CD4-positive, alpha-beta T cell (primary cell): ENCODE measurements at regions of chr6 and their contacts with region 1.

Region 1: DNA sequence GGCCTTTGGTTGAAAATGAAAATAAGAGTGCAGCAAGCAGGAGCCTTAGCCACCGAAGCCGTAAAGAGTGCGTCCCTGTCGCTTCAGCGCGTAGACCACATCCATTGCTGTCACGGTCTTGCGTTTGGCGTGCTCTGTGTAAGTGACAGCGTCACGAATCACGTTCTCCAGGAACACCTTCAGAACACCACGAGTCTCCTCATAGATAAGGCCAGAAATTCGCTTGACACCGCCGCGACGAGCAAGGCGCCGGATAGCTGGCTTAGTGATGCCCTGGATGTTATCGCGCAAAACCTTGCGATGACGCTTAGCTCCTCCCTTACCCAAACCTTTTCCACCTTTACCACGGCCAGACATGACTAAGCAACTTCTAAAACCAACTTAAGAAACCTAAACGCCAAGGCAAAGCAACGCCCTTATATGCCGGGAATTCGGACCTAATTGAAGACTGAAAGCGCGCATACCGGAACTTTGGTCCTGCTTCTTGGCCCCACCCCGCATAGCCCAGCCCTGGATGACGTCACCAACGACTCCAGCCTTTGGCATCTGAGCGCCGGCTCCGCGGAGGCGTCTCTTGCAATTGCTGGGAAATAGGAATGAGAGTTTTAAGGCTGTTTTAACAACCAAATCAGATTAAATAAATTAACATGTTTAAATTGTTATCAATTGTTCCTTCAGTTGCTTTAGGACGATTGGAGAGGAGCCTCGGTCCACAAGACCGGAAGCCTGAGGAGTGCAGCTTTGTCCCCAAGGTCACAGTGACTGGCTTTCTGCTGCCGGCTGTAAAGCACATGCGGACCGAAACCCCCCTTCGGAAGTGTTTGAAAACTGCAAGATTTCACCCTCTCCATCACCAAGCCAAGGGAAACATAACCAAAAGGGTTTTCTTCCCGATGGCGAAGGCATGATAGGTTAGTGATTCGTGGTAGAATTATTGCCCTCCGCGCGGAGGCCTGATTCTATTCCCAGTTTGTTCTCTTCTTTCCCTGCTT is 79.6 kb upstream of the BTN3A2 start:
- DNase-seq: peak; percentile 85 to 99 (median 92)
- ATAC-seq: peak; percentile 82
- H3K4me3 ChIP-seq: peak overlapping the region; percentile 62
- H3K4me3 Mint-ChIP-seq: peak overlapping the region; percentile 87
- H3K27ac ChIP-seq: peak overlapping the region; percentile 82 to 85
- H3K27ac Mint-ChIP-seq: peak overlapping the region; percentile 96
- H3K4me1 ChIP-seq: peaks cover 16% of the 10 kb centered on the region
- H3K4me1 Mint-ChIP-seq: peaks cover 24% of the 10 kb centered on the region
- H3K27me3 ChIP-seq: no peaks in the 10 kb centered on the region
- H3K27me3 Mint-ChIP-seq: peaks cover 11% of the 10 kb centered on the region
- CTCF ChIP-seq: no peak

Region 2: GRCh38 chr6:25732468-25733198 is 552.8 kb before region 1 on chr6:
- CTCF ChIA-PET with region 1: no interaction called
- POLR2A ChIA-PET with region 1: no interaction called
- intact Hi-C with region 1: no loop called
- DNase-seq: no peak
- ATAC-seq: no peak
- H3K4me3 ChIP-seq: no peak overlapping the region
- H3K4me3 Mint-ChIP-seq: no peak overlapping the region
- H3K27ac ChIP-seq: no peak overlapping the region
- H3K27ac Mint-ChIP-seq: no peak overlapping the region
- H3K4me1 ChIP-seq: no peaks in the 10 kb centered on the region
- H3K4me1 Mint-ChIP-seq: no peaks in the 10 kb centered on the region
- H3K27me3 ChIP-seq: peaks cover 14 to 42% of the 10 kb centered on the region in 2 experiments
- H3K27me3 Mint-ChIP-seq: peaks cover 86% of the 10 kb centered on the region
- CTCF ChIP-seq: no peak

Region 3: GRCh38 chr6:26175428-26176181 is 109.8 kb before region 1 on chr6:
- CTCF ChIA-PET with region 1: no interaction called
- POLR2A ChIA-PET with region 1: interaction called, 23 read pairs
- intact Hi-C with region 1: loop called (anchors 1 kb)
- DNase-seq: peak in 11 of 14 experiments; percentile 13 to 85 (median 54)
- ATAC-seq: no peak
- H3K4me3 ChIP-seq: no peak overlapping the region
- H3K4me3 Mint-ChIP-seq: peak overlapping the region; percentile 83
- H3K27ac ChIP-seq: peak overlapping the region in 1 of 2 donors; percentile 41
- H3K27ac Mint-ChIP-seq: peak overlapping the region; percentile 93
- H3K4me1 ChIP-seq: peaks cover 17% of the 10 kb centered on the region
- H3K4me1 Mint-ChIP-seq: peaks cover 53% of the 10 kb centered on the region
- H3K27me3 ChIP-seq: no peaks in the 10 kb centered on the region
- H3K27me3 Mint-ChIP-seq: no peaks in the 10 kb centered on the region
- CTCF ChIP-seq: peak; percentile 87

Region 4: DNA sequence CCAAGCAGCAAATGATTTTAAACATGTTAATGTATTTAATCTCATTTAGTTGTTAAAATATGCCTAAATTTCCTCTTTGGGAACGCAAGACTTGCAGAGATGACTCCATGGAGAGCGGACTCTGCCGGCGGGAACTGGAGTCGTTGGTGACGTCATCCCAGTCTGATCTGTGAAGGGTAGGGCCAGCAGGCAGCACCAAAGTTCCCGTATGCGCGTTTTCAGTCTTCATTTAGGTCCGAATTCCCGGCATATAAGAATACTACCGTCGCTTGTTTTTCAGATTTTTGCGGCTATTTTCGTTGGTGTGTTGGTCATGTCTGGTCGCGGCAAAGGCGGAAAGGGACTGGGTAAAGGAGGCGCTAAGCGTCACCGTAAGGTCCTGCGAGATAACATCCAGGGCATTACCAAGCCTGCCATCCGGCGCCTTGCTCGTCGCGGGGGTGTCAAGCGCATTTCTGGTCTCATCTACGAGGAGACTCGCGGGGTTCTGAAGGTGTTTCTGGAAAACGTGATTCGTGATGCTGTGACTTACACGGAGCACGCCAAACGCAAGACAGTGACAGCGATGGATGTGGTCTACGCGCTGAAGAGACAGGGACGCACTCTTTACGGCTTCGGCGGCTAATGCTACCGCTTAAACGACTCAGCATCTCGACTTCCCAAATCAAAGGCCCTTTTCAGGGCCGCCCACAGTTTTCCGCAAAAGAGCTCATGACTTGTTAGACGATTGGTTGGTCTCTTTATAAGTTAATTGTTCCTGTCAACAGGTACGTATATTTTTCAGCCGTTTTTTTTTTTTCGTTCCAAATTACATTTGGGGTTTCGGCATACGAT is 80.9 kb before region 1 on chr6:
- CTCF ChIA-PET with region 1: interaction called, 3 read pairs
- POLR2A ChIA-PET with region 1: interaction called, 163 read pairs
- intact Hi-C with region 1: loop called in 1 of 2 experiments (anchors 2 kb)
- DNase-seq: peak; percentile 73 to 98 (median 80)
- ATAC-seq: peak; percentile 69
- H3K4me3 ChIP-seq: peak overlapping the region; percentile 68
- H3K4me3 Mint-ChIP-seq: no peak overlapping the region
- H3K27ac ChIP-seq: peak overlapping the region; percentile 89 to 90
- H3K27ac Mint-ChIP-seq: no peak overlapping the region
- H3K4me1 ChIP-seq: peaks cover 34% of the 10 kb centered on the region
- H3K4me1 Mint-ChIP-seq: peaks cover 8% of the 10 kb centered on the region
- H3K27me3 ChIP-seq: no peaks in the 10 kb centered on the region
- H3K27me3 Mint-ChIP-seq: no peaks in the 10 kb centered on the region
- CTCF ChIP-seq: peak; percentile 32

Region 5: DNA sequence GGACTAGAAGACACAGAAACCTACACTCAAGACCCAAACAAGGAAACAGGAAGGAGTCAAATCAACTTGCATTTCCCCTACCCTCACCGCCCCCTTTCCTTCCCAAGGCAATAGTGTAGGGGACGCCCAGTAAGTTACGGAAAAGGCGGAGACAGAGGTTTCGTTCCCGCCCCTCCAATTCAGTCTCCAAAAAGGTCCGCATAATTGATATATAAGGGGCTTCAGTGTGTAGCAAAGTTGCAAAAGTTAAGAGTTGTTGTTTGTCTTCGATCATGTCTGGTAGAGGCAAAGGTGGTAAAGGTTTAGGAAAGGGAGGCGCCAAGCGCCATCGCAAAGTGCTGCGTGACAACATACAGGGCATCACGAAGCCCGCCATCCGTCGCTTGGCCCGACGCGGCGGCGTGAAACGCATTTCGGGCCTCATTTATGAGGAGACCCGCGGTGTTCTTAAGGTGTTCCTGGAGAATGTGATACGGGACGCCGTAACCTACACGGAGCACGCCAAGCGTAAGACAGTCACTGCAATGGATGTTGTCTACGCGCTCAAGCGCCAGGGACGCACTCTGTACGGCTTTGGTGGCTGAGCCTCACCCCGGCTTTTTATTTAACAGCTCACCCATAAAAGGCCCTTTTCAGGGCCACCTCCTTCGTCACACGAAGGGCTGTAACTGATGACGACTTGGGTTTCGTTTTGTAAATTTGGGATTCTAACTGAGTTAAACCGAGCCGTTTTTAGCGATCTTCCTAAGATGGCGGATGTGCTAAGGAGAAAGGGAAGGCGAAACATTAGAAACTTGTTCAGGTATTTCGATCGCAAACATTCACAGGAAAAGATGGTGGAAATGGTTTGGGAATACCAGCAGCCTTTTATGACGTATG is 45.0 kb before region 1 on chr6:
- CTCF ChIA-PET with region 1: no interaction called
- POLR2A ChIA-PET with region 1: interaction called, 133 read pairs
- intact Hi-C with region 1: no loop called
- DNase-seq: peak; percentile 45 to 96 (median 64)
- ATAC-seq: peak; percentile 76
- H3K4me3 ChIP-seq: peak overlapping the region; percentile 66
- H3K4me3 Mint-ChIP-seq: peak overlapping the region; percentile 84
- H3K27ac ChIP-seq: peak overlapping the region; percentile 78 to 90
- H3K27ac Mint-ChIP-seq: peak overlapping the region; percentile 96
- H3K4me1 ChIP-seq: peaks cover 17% of the 10 kb centered on the region
- H3K4me1 Mint-ChIP-seq: peaks cover 23% of the 10 kb centered on the region
- H3K27me3 ChIP-seq: no peaks in the 10 kb centered on the region
- H3K27me3 Mint-ChIP-seq: no peaks in the 10 kb centered on the region
- CTCF ChIP-seq: no peak

Region 6: DNA sequence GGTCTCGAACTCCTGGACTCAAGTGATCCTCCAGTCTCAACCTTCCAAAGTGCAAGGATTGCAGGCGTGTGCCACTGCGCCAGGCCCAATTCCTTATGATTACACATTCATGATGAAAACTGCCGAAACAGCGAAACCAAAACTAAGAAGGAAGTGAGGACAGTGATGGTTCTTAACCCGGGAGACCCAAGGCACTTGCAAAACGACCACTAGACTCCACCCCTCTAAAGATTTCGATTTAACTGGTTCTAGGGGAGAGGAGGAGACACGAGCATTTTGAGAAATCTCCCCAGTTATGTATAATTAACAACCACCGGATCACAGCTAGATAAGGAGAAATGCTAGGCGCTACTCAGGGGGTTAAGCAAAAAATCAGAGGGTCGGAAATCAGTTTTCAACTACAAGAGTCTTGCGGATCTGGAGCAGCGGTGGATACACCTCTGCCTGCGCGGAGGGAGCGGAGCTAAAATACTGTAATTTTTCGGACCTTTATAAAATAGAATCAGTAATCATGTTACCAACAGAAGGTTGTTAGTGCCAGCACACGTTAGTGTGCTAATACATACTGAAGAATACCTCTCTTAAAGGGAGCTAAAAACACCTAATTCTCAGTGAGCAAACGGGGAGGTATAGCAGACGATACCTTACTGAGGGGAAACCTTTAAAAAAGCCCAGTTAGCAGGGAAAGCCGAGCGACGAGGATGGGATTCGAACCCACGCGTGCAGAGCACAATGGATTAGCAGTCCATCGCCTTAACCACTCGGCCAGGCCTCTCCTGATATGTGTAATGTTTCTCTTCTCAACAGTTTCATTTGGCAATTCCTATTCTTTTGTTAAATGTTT is 19.6 kb after region 1 on chr6:
- CTCF ChIA-PET with region 1: interaction called, 3 read pairs
- POLR2A ChIA-PET with region 1: interaction called, 24 read pairs
- intact Hi-C with region 1: loop called (anchors 1 to 2 kb)
- DNase-seq: peak in 12 of 14 experiments; percentile 48 to 90 (median 62)
- ATAC-seq: peak; percentile 73
- H3K4me3 ChIP-seq: peak overlapping the region; percentile 60
- H3K4me3 Mint-ChIP-seq: peak overlapping the region; percentile 93
- H3K27ac ChIP-seq: peak overlapping the region in 1 of 2 donors; percentile 26
- H3K27ac Mint-ChIP-seq: peak overlapping the region; percentile 93
- H3K4me1 ChIP-seq: peaks cover 5% of the 10 kb centered on the region
- H3K4me1 Mint-ChIP-seq: peaks cover 33% of the 10 kb centered on the region
- H3K27me3 ChIP-seq: no peaks in the 10 kb centered on the region
- H3K27me3 Mint-ChIP-seq: peaks cover 12% of the 10 kb centered on the region
- CTCF ChIP-seq: no peak

Region 7: GRCh38 chr6:26322645-26323482 is 37.4 kb after region 1 on chr6:
- CTCF ChIA-PET with region 1: interaction called, 3 read pairs
- POLR2A ChIA-PET with region 1: interaction called, 25 read pairs
- intact Hi-C with region 1: loop called in 1 of 2 experiments (anchors 5 kb)
- DNase-seq: peak in 10 of 14 experiments; percentile 20 to 88 (median 52)
- ATAC-seq: peak; percentile 75
- H3K4me3 ChIP-seq: peak overlapping the region; percentile 54
- H3K4me3 Mint-ChIP-seq: peak overlapping the region; percentile 96
- H3K27ac ChIP-seq: no peak overlapping the region
- H3K27ac Mint-ChIP-seq: peak overlapping the region; percentile 93
- H3K4me1 ChIP-seq: peaks cover 23% of the 10 kb centered on the region
- H3K4me1 Mint-ChIP-seq: peaks cover 30% of the 10 kb centered on the region
- H3K27me3 ChIP-seq: no peaks in the 10 kb centered on the region
- H3K27me3 Mint-ChIP-seq: peaks cover 35% of the 10 kb centered on the region
- CTCF ChIP-seq: no peak